GM18951 (cell line): ENCODE measurements at regions of chr9 and their contacts with region 1.

Region 1: DNA sequence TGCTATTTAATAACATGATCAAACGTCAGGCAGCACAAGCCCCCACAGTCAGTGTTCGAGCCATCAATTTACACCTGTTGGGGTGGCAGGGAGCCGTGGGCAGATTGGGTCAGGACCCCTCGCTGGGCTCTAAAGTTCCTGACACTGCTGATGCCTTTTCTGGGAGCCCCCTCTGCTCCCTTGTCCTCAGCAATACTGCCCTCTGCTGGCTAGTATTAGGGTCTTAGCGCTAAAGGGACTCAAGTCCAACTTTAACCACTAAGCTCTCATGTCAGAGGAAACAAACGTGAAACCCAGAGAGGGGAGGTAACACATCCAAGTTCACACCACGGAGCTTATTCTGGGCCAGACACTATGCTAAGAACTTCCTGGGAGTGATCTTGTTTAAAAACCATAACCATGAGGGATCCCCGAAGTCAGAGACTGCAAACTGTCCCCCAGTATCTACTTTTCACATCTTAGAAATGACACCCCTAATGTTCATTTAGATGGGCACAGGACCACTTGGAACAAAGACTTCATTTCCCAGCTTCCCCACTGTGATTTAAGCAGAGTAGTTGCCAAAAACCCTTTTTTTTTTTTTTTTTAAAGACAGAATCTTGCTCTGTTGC is 20.4 kb downstream of the ANKS6 start:
- POLR2A ChIP-seq: no peak

Region 2: GRCh38 chr9:98536542-98537173 is 239.3 kb before region 1 on chr9:
- in situ Hi-C with region 1: loop called (anchors 10 kb)
- POLR2A ChIP-seq: no peak

Region 3: DNA sequence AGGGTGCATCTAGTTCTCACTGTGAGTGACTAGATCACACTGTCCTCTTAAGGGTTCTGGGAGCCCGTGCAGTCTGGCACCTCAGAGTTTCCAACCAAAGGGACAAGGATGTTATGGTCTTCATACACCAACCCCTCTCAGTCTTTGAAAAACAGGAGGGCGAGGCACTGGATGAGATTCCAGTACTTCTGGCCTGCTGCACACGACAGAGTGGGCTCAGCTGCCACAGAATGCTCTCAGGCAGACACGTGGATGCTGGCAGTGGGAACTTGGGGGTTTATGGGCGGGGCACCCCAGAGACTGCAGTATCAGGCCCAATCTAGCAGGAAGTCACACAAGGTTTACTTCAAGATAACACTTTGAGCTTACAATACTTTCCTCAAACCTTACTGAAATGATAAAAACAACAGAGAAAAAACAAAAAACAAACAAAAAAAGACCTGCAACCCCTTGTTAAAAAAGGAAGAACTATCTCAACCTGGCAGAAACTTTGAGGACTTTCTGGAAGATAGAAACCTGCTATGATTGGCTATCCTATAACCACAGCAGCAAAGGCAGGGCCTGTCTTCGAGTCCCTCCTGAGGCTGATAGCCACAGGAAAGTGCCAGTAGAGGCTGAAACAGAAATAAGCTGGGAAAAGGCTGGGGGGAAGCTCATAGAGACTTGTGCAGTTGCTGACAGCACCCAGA is 300.7 kb after region 1 on chr9:
- in situ Hi-C with region 1: no loop called
- POLR2A ChIP-seq: no peak